Left ventricle myocardium superior (tissue), 1 donor: ENCODE measurements at regions of chr14 and their contacts with region 1.

Region 1: GRCh38 chr14:64636208-64636979 is 67.8 kb upstream of the PLEKHG3 start:
- DNase-seq: peak; percentile 71
- ATAC-seq: peak; percentile 93

Region 2: DNA sequence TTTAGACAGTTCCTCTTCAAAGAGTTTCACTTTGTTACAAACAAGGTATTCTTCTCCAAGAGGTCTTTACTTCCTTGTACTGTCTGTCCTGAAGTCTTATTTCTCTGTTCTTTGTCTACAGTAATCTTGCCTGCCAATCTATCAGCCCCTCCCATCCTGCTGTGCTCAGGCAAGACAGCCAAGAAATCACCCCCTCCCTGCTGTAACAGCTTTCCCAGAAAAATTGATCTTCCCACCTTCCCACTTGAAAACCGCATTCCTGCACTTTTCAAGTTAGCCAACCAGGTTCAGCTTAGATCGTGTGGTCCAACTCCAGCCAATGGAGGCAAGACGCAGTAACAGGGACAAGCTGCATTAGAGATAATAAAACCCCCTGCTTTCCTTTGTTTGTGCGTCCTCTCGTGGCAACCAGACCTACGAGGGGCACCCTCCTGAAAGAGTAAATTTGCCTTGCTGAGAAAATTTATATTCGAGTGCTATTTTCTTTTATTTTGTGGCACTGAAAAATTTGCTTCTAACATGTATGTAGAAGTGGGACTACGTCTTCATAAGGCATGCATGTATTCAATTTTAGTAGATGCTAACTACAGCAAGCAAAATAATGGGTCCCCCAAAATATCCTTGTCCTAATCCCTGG is 295.7 kb before region 1 on chr14:
- intact Hi-C with region 1: loop called (anchors 10 kb)
- DNase-seq: no peak
- ATAC-seq: no peak

Region 3: GRCh38 chr14:64540208-64541157 is 95.9 kb before region 1 on chr14 and contains the start of gene HSPA2:
- intact Hi-C with region 1: loop called (anchors 10 kb)
- DNase-seq: peak; percentile 99
- ATAC-seq: peak; percentile 98
- total RNA-seq, gene HSPA2: 13.8 TPM